Activated T-helper 1 cell treated with anti-CD3 and anti-CD28 coated beads, Interleukin-12 subunit alpha, Interleukin-12 subunit beta, Interleukin-2, Interleukin-4 antibody, amounts not matched to agents 30 ng/mL and 10 ng/mL and 1 ng/mL, durations not matched to agents 14 hours and 24 hours and 36 hours (primary cell): ENCODE measurements at regions of chr1 and their contacts with region 1.

Region 1: GRCh38 chr1:205227584-205228006 is at the start of gene TMCC2:
- DNase-seq: peak; percentile 77
- H3K4me3 Mint-ChIP-seq: peak within 1 kb of the TSS; percentile 97
- H3K27ac Mint-ChIP-seq: peak within 1 kb of the TSS; percentile 93
- H3K4me1 Mint-ChIP-seq: peaks cover 46% of the 10 kb centered on the region
- H3K27me3 Mint-ChIP-seq: peaks cover 30% of the 10 kb centered on the region
- total RNA-seq, gene TMCC2: 25.0 and 25.2 TPM in 2 replicates

Region 2: DNA sequence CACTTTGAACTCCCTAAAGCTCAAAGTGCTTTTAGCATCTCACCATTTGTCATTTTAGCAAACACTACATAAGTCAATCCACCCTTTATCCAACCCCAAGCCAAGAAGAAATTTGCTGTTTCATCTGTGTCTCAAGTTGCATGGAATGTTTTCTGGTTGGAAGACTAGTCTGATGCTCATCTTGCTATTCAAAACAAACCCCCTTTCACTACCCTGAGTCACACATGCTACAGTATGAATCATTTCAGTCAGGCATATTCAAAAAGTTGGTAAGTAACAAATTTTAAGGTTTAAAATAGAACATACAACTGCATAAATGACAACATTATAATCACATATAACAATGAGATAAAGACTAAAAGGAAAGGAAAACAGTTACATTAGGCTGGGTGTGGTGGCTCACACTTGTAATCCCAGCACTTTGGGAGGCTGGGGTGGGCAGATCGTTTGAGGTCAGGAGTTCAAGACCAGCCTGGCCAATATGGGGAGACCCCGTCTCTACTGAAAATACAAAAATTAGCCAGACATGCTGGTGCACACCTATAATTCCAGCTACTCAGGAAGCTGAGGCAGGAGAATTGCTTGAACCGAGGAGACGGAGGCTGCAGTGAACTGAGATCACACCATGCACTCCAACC is 54.7 kb before region 1 on chr1:
- intact Hi-C with region 1: loop called (anchors 2 kb)
- DNase-seq: no peak
- H3K4me3 Mint-ChIP-seq: peak overlapping the region; percentile 45
- H3K27ac Mint-ChIP-seq: peak overlapping the region; percentile 81
- H3K4me1 Mint-ChIP-seq: peaks cover 37% of the 10 kb centered on the region
- H3K27me3 Mint-ChIP-seq: no peaks in the 10 kb centered on the region

Region 3: DNA sequence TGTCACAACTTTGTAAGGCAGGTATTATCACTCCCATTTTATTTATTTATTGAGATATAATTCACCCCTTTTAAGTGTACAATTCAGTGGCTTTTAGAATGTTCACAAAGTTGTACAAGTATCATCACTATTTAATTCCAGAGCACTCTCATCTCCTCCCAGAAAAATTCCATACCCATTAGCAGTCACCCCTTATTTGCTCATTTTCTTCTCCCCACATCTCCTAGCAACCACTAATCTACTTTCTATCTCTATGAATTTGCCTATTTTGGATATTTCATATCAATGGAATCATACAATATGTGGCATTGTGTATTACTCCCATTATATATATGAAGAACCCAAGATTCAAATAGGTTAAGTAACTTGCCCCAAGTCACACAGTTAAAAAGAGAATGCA is 23.0 kb before region 1 on chr1:
- intact Hi-C with region 1: loop called (anchors 1 kb)
- DNase-seq: no peak
- H3K4me3 Mint-ChIP-seq: peak overlapping the region; percentile 63
- H3K27ac Mint-ChIP-seq: peak overlapping the region; percentile 76
- H3K4me1 Mint-ChIP-seq: peaks cover 60% of the 10 kb centered on the region
- H3K27me3 Mint-ChIP-seq: no peaks in the 10 kb centered on the region

Region 4: GRCh38 chr1:205237526-205238484 is 10.2 kb after region 1 on chr1:
- intact Hi-C with region 1: loop called (anchors 1 kb)
- DNase-seq: no peak
- H3K4me3 Mint-ChIP-seq: peak overlapping the region; percentile 63
- H3K27ac Mint-ChIP-seq: peak overlapping the region; percentile 94
- H3K4me1 Mint-ChIP-seq: peaks cover 75% of the 10 kb centered on the region
- H3K27me3 Mint-ChIP-seq: no peaks in the 10 kb centered on the region

Region 5: GRCh38 chr1:205273551-205273982 is 46.0 kb after region 1 on chr1:
- intact Hi-C with region 1: loop called (anchors 1 kb)
- DNase-seq: peak; percentile 74
- H3K4me3 Mint-ChIP-seq: no peak overlapping the region
- H3K27ac Mint-ChIP-seq: no peak overlapping the region
- H3K4me1 Mint-ChIP-seq: peaks cover 32% of the 10 kb centered on the region
- H3K27me3 Mint-ChIP-seq: no peaks in the 10 kb centered on the region

Region 6: GRCh38 chr1:205321164-205321958 is 93.8 kb after region 1 on chr1 and contains the start of gene NUAK2:
- intact Hi-C with region 1: loop called (anchors 2 kb)
- DNase-seq: peak; percentile 78
- H3K4me3 Mint-ChIP-seq: peak within 1 kb of the TSS; percentile 95
- H3K27ac Mint-ChIP-seq: peak within 1 kb of the TSS; percentile 80
- H3K4me1 Mint-ChIP-seq: peaks cover 68% of the 10 kb centered on the region
- H3K27me3 Mint-ChIP-seq: peaks cover 8% of the 10 kb centered on the region
- total RNA-seq, gene NUAK2: 1.1 and 1.3 TPM in 2 replicates